H1 (cell line): ENCODE measurements at regions of chr17 and their contacts with region 1.

Region 1: DNA sequence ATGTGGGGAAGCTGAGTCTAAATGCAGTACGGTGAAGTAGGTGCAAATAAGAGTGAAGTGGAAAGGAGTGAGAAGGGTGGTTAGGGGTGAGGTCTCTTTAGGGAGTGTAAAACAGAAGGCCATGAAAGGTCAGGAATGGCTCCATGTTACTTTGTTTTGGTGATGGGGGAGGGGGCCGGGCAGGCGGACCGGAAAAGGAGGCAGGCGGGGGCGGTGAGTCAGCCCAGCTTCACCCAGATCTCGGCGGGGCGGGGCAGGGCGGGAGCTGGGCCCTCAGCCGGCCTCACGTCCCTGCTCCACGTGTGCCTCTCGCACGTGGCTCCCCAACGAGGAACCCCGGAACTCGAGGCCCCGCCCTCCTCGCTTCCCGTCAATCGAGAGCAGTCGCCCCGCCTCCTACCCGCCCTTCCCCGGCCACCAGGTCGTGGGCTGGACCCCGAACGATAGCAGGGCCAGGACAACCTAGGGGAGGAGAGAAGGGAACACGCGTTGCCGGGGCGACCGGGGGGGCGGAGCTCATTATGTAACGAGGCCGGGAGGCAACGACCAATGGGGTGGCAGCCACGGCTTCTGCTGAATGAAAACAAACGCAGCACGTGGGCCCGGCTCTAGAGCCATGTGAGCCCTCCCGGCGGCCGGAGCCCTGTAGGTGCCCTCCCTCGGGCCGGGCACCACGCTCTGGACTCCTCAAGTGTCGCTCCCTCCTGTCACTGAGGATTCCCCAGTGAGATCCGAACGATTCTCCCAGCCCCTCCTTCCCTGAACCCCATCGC is 1.4 kb downstream of the NR1D1 start:
- DNase-seq: peak; percentile 95 to 97
- H3K4me3 ChIP-seq: peak overlapping the region; percentile 48 to 83 (median 63)
- H3K27ac ChIP-seq: 0 out of 2 replicates have a peak overlapping the region, but pooled peaks have one; percentile 25
- H3K4me1 ChIP-seq: peaks cover 14 to 33% (median 23%) of the 10 kb centered on the region in 4 experiments
- H3K27me3 ChIP-seq: peaks cover 6 to 24% (median 16%) of the 10 kb centered on the region in 4 experiments; a peak in 6 of 7 replicates
- CTCF ChIP-seq: no peak
- EP300 ChIP-seq: no peak
- POLR2A ChIP-seq: no peak
- RAD21 ChIP-seq: no peak

Region 2: DNA sequence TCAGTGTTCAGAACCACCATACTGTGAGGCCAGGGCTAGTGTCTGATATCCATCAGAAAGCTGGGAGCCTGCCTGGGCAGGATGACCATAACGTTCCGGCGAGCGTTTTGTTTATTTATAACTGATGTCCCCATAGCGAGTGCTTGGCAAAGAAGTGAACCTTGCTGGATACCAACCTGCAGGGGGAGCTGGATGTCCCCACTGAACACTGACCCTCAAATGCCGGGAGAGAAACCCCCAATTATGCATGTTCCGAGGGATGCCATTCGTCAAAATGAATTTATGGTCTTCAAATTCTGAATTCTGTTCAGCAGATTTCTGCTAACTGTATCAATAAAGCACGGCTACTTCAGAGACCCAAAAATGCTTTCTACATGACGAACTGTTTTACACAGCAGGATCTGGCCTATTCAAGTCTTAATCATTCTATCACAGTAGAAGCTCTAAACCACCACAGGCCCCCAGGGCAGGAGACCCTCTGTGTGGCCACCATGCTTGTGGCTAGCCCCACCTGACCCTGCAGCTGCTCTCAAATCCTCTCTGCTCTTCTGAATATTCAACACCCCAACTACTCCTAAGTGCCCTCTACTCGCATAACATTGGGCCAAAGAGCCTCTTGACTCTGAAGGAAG is 60.0 kb before region 1 on chr17:
- CTCF ChIA-PET with region 1: interaction called, 35 read pairs
- POLR2A ChIA-PET with region 1: interaction called, 5 read pairs
- DNase-seq: peak in 1 of 2 experiments; percentile 64
- H3K4me3 ChIP-seq: no peak overlapping the region
- H3K27ac ChIP-seq: no peak overlapping the region
- H3K4me1 ChIP-seq: peaks cover 0 to 12% (median 4%) of the 10 kb centered on the region in 4 experiments; a peak in 5 of 7 replicates
- H3K27me3 ChIP-seq: no peaks in the 10 kb centered on the region
- CTCF ChIP-seq: peak; percentile 69 to 78 (median 72)
- EP300 ChIP-seq: no peak
- POLR2A ChIP-seq: no peak
- RAD21 ChIP-seq: peak; percentile 49 to 70

Region 3: DNA sequence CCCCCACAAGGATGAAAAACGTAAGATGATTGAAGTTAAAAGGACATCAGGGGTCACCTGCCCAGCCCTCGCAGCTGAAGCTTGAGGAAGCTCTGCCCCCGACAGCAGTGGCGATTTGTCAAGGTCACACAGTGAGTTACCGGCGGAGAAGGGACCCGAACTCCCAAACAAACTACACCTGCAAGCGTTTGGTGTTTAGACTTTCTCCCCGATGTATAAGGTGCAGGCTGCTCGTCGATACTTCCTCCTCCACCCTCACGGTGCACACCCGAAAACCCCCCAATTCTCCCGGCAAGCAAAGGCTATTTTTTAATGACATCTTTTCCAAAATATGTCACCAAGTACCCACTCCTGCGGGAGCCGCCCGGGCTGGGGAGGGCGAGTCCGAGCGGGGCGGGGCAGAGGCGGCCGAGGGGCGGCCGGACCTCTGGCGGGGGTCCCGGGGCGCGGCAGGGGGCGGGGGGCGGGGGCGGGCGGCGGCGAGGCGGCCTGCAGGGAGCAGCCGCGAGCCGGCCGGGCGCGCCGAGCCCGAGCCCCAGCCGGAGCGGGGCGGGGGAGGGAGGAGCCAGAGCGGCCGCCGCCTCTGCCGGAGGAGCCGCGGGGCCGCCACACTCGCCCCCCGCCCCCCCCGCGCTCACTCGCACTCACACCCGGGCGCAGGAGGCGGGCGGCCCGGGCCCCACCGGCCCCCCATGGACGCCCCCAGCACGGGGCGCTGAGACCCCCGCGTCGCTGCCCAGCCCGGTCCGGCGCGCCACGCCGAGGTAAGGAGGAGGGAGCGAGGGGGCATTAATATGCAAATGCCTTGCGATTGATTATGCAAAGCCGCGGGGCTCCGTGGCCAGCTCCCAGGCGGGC is 36.5 kb before region 1 on chr17 and contains the start of gene THRA:
- CTCF ChIA-PET with region 1: interaction called, 14 read pairs
- POLR2A ChIA-PET with region 1: interaction called, 24 read pairs
- DNase-seq: peak in 1 of 2 experiments; percentile 89
- H3K4me3 ChIP-seq: peak within 1 kb of the TSS; percentile 78 to 87 (median 81)
- H3K27ac ChIP-seq: peak within 1 kb of the TSS; percentile 60; the same call in 1 of the 2 replicates
- H3K4me1 ChIP-seq: peaks cover 21 to 46% (median 31%) of the 10 kb centered on the region in 4 experiments
- H3K27me3 ChIP-seq: peaks cover 0 to 15% (median 10%) of the 10 kb centered on the region in 4 experiments; a peak in 6 of 7 replicates
- CTCF ChIP-seq: no peak; a peak in 1 of 4 replicates
- EP300 ChIP-seq: no peak
- POLR2A ChIP-seq: no peak
- RAD21 ChIP-seq: no peak
- total RNA-seq, gene THRA: 10.2 and 11.8 TPM in 2 replicates

Region 4: GRCh38 chr17:40139566-40140058 is 40.6 kb after region 1 on chr17:
- CTCF ChIA-PET with region 1: no interaction called
- POLR2A ChIA-PET with region 1: interaction called, 19 read pairs
- DNase-seq: no peak
- H3K4me3 ChIP-seq: peak overlapping the region; percentile 51 to 88 (median 68)
- H3K27ac ChIP-seq: peak overlapping the region; percentile 84
- H3K4me1 ChIP-seq: peaks cover 0 to 4% (median 1%) of the 10 kb centered on the region in 4 experiments; a peak in 2 of 7 replicates
- H3K27me3 ChIP-seq: no peaks in the 10 kb centered on the region
- CTCF ChIP-seq: no peak
- EP300 ChIP-seq: no peak
- POLR2A ChIP-seq: no peak
- RAD21 ChIP-seq: no peak

Region 5: DNA sequence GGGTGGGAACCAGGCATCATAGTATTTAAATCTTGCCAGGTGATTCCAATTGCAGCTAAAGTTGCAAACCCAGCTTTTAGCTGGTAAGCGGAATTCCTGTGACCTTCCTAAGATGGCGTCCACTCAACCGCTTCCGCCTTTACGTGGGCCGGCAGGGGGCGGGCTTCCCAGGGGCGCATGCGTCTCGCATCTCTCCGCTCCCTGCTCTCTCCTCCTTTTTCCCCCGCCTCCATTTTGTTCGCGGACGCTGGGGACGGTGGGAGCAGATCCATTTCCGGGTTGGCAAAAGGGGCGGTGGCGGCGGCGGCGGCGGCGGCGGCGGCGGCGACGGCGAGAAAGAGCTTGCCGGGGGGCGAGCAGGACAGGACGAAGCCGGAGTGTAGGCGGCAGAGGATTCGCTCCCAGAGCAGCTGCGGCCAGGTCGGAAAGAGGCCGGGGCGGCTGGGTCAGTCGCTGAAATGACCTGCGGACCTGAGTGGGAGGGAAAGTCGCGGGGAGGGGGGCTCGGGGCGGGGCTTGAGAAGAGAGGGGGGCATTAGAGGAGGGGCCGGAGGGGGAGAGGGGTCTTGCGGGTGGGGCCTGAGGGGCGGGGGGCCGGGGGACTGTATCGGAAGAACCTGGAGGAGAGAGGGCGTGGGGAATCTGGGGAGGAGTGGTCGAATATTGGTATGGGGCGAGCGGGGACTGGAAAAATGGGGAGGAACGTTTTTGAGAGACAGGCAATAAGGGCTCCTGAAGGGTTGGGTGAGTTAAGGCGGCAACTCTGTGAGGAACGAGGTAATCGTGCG is 120.2 kb after region 1 on chr17 and contains the start of gene WIPF2:
- CTCF ChIA-PET with region 1: no interaction called
- POLR2A ChIA-PET with region 1: no interaction called
- DNase-seq: peak; percentile 91 to 98
- H3K4me3 ChIP-seq: peak within 1 kb of the TSS; percentile 79 to 100 (median 86)
- H3K27ac ChIP-seq: peak within 1 kb of the TSS; percentile 87
- H3K4me1 ChIP-seq: 0 out of 7 replicates have a peak, but pooled peaks cover 0 to 3% (median 1%) of the 10 kb centered on the region in 4 experiments
- H3K27me3 ChIP-seq: no peaks in the 10 kb centered on the region
- CTCF ChIP-seq: peak; percentile 55 to 81 (median 69)
- EP300 ChIP-seq: peak in 1 of 2 experiments; percentile 7; a peak in 2 of 3 replicates
- POLR2A ChIP-seq: peak in 1 of 2 experiments; percentile 77; a peak in 2 of 3 replicates
- RAD21 ChIP-seq: peak; percentile 2 to 26; a peak in 2 of 4 replicates
- total RNA-seq, gene WIPF2: 21.1 and 25.3 TPM in 2 replicates

Region 6: DNA sequence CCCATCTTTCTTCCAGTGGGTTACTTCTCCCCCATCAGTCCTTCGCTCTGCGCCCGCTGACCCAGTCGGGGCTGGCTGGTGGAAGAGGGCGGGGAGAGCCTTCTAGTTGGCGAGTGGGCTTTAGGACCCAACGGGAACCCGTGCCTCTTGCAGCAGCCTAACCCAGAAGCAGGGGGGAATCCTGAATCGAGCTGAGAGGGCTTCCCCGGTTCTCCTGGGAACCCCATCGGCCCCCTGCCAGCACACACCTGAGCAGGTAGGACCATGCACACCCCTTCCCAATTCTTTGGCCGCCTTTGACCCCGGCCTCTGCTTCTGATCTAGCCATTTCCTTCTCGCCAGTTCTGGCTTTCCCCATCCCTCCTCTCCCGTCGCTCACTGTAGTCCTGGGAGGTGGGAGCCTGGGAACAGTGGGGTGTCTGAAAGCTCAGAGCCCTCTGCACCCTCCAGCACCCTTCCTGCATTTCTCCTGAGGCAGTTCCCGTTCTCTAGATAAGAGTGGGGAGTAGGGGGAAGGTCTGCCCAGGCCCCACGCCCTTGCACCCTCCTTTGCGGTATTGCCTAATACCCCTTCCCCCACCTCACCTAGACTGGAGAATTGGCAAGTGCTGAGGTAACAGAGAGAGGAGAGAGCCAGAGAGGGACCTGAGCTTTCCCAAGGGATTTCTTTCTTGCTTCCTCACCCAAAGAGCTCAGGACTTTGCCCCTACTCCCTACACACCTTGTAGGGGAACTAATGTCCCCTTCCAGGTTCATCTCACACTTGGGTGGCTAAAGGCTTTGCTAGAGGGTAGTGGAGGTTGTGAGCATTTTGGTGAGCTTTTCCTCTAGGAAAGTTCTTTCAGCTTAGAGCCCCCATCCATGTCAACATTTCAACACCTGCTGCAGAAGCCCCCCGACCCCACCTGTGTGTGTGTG is 210.3 kb after region 1 on chr17 and contains the start of gene RARA:
- CTCF ChIA-PET with region 1: no interaction called
- POLR2A ChIA-PET with region 1: no interaction called
- DNase-seq: peak in 1 of 2 experiments; percentile 86
- H3K4me3 ChIP-seq: peak within 1 kb of the TSS; percentile 65 to 92 (median 80)
- H3K27ac ChIP-seq: no peak within 1 kb of the TSS
- H3K4me1 ChIP-seq: peaks cover 15 to 38% (median 27%) of the 10 kb centered on the region in 4 experiments
- H3K27me3 ChIP-seq: no peaks in the 10 kb centered on the region; a peak in 1 of 7 replicates
- CTCF ChIP-seq: no peak; a peak in 1 of 4 replicates
- EP300 ChIP-seq: no peak
- POLR2A ChIP-seq: 0 out of 3 replicates have a peak, but pooled peaks of 1 of the 2 experiments have one; percentile 47
- RAD21 ChIP-seq: peak in 1 of 2 experiments; percentile 12; a peak in 1 of 4 replicates
- total RNA-seq, gene RARA: 13.4 and 16.5 TPM in 2 replicates